Right cardiac atrium (tissue), 5 donors: ENCODE measurements at regions of chr1 and their contacts with region 1.

Region 1: GRCh38 chr1:101238681-101239094 is 1.9 kb downstream of the S1PR1 start:
- DNase-seq: peak; percentile 89 to 96 (median 96)
- ATAC-seq: peak; percentile 60 to 63
- H3K4me3 ChIP-seq: peak overlapping the region; percentile 95
- H3K27ac ChIP-seq: peak overlapping the region; percentile 87
- H3K4me1 ChIP-seq: no peaks in the 10 kb centered on the region
- H3K27me3 ChIP-seq: no peaks in the 10 kb centered on the region

Region 2: GRCh38 chr1:101025657-101026504 is 212.8 kb before region 1 on chr1 and contains the start of gene DPH5:
- intact Hi-C with region 1: loop called in 1 of 4 experiments (anchors 5 kb)
- DNase-seq: peak; percentile 93 to 97 (median 95)
- ATAC-seq: peak; percentile 98
- H3K4me3 ChIP-seq: peak within 1 kb of the TSS; percentile 93
- H3K27ac ChIP-seq: peak within 1 kb of the TSS; percentile 98
- H3K4me1 ChIP-seq: no peaks in the 10 kb centered on the region
- H3K27me3 ChIP-seq: no peaks in the 10 kb centered on the region
- total RNA-seq, gene DPH5: 30.9 to 41.2 (median 35.0) TPM

Region 3: GRCh38 chr1:101136739-101137138 is 101.9 kb before region 1 on chr1:
- intact Hi-C with region 1: loop called in 3 of 4 experiments (anchors 5 to 10 kb)
- DNase-seq: no peak
- ATAC-seq: peak; percentile 62 to 66
- H3K4me3 ChIP-seq: no peak overlapping the region
- H3K27ac ChIP-seq: no peak overlapping the region
- H3K4me1 ChIP-seq: peaks cover 2% of the 10 kb centered on the region
- H3K27me3 ChIP-seq: no peaks in the 10 kb centered on the region

Region 4: GRCh38 chr1:101181930-101182329 is 56.8 kb before region 1 on chr1:
- intact Hi-C with region 1: loop called in 1 of 4 experiments (anchors 10 kb)
- DNase-seq: peak in 1 of 3 donors; percentile 10
- ATAC-seq: peak; percentile 77 to 95
- H3K4me3 ChIP-seq: no peak overlapping the region
- H3K27ac ChIP-seq: peak overlapping the region; percentile 55
- H3K4me1 ChIP-seq: peaks cover 3% of the 10 kb centered on the region
- H3K27me3 ChIP-seq: no peaks in the 10 kb centered on the region